ENCODE measurements at regions of chr6 and their contacts with region 1.

Region 1: GRCh38 chr6:36027501-36028087 is at the start of gene MAPK14:
- DNase-seq: peak; percentile 95 to 100 (median 98)

Region 2: GRCh38 chr6:35920793-35921732 is 106.5 kb before region 1 on chr6 and contains the start of gene SRPK1:
- intact Hi-C with region 1: loop called (anchors 2 kb)
- DNase-seq: peak; percentile 80 to 98 (median 90)

Region 3: DNA sequence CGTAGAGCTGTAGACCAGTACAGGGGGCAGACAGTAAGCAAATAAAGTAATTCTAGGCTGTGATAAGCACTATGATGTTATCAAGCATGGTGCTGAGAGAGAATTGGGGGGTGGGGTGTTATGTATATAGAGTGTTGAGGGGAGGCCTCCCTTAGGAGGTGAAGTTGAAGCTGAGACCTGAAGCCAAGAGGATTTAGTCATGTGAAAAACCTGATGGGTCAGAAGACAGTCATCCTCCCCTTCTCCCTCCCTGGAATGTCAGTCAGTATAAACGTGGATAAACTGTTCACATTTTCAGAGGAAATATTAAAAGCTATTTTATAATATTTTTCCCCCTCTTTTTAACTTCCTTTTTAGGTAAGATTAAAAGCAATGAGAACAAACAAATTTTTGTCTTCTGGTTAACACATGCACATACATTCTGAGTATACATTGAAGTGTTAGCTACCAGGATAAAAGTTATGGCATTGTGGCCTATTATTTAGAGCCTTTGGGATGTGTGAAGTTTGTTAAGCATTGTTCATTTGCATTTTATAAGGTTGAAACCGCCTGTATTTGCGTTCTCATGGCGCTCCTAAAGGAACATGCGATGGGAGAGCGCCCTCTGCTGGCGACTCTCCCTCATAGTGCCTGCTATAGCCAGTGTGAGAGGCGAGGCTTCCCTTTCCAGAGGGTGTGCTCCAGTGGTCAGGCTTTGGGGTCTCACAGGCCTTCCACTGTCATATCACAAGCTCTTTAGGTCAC is 67.3 kb after region 1 on chr6:
- intact Hi-C with region 1: loop called (anchors 1 kb)
- DNase-seq: peak; percentile 71 to 97 (median 86)

Region 4: DNA sequence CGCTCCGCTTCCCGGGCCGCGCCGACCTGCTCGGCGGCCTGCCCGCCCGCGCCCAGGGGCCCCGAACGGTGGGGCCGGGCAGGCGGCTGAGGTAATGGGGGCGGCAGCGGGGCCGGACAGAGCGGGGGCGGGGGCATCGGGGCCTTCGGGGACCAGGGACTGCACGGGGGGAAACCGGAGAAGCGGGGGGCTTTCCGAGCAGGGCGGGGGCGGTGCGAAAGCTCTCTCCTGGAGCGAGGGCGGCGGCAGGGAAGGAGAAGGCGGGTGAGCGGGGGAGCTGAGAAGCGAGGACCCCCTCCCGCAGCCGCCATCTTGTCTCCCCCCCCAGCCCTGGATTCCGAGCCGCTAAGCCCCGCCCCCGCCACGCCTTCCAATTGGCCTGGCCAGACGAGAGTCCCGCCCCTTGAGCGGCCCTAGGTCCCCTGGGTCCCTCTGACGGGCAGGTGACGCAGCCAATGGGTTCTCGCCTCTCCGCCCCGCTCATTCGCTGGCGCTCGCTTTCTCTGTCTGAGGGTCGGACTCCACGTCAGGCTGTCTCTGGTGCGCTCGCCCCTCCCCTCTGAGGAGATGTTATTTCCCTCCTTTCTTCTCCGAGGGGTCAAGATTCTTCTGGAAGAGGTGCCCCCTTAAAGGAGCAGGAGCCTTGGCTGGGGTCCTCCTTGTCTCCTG is 169.4 kb after region 1 on chr6:
- intact Hi-C with region 1: loop called (anchors 1 kb)
- DNase-seq: peak; percentile 98 to 100 (median 100)

Region 5: DNA sequence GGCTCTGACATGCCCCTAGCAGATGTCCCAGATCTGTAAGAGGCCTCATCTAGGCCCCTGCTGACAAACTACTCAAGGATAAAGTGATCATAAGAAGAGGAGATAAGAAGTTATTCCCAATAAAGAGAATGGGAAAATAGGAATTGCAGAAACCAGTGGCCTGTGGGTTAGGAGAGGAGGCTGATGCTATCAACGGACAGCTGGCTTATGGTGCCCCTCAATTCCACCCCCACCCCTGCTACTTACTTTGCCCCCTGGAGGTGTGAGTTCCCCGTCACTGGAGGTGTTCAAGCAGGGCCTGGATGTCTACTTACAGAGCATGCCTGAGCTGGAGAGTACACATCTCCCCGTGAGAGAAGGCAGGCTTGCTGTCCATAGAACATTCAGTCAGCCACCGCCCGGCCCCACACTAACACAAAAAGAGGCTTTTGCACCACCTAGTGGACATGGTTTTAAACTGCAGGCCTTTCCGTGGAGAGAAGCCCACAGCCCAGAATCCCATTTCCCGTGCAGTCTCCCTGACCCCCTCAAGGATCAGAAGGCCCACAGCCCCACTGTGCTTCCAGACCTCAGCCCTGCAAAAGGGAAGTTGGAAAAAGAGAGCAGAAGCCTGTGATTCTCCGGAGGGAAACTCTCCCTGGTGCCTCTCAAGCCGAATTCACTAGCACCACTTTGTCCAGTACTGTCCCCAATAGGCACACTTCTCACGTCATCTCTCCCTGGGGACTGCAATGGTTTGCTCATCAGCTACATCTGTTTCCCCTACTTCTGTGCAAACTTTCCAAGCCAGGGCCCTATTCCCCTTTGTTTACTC is 332.9 kb after region 1 on chr6:
- intact Hi-C with region 1: no loop called
- DNase-seq: peak; percentile 66 to 97 (median 82)